A549 (cell line): ENCODE measurements at regions of chr1 and their contacts with region 1.

Region 1: GRCh38 chr1:228691926-228692325 is 43.4 kb upstream of the RHOU start:
- DNase-seq: peak; percentile 69 to 72
- ATAC-seq: peak in 1 of 2 experiments; percentile 80; a peak in 4 of 6 replicates
- H3K4me3 ChIP-seq: no peak overlapping the region
- H3K27ac ChIP-seq: no peak overlapping the region
- H3K4me1 ChIP-seq: peaks cover 7% of the 10 kb centered on the region; the same call in 1 of the 3 replicates
- CTCF ChIP-seq: peak; percentile 77
- EP300 ChIP-seq: no peak
- POLR2A ChIP-seq: no peak
- RAD21 ChIP-seq: peak; percentile 87 to 89

Region 2: GRCh38 chr1:228471762-228472398 is 220.0 kb before region 1 on chr1:
- CTCF ChIA-PET with region 1: no interaction called
- POLR2A ChIA-PET with region 1: no interaction called
- DNase-seq: peak; percentile 64 to 75
- ATAC-seq: peak; percentile 70 to 89
- H3K4me3 ChIP-seq: no peak overlapping the region
- H3K27ac ChIP-seq: no peak overlapping the region
- H3K4me1 ChIP-seq: no peaks in the 10 kb centered on the region
- CTCF ChIP-seq: peak; percentile 40
- EP300 ChIP-seq: no peak
- POLR2A ChIP-seq: no peak
- RAD21 ChIP-seq: peak in 1 of 2 experiments; percentile 55; a peak in 2 of 5 replicates

Region 3: GRCh38 chr1:228702433-228702832 is 10.5 kb after region 1 on chr1:
- CTCF ChIA-PET with region 1: interaction called, 16 read pairs
- POLR2A ChIA-PET with region 1: no interaction called
- DNase-seq: no peak
- ATAC-seq: no peak
- H3K4me3 ChIP-seq: no peak overlapping the region
- H3K27ac ChIP-seq: no peak overlapping the region
- H3K4me1 ChIP-seq: no peaks in the 10 kb centered on the region
- CTCF ChIP-seq: no peak
- EP300 ChIP-seq: no peak
- POLR2A ChIP-seq: no peak
- RAD21 ChIP-seq: no peak

Region 4: GRCh38 chr1:229056046-229056445 is 364.1 kb after region 1 on chr1:
- CTCF ChIA-PET with region 1: no interaction called
- POLR2A ChIA-PET with region 1: no interaction called
- DNase-seq: no peak
- ATAC-seq: no peak
- H3K4me3 ChIP-seq: no peak overlapping the region
- H3K27ac ChIP-seq: no peak overlapping the region
- H3K4me1 ChIP-seq: no peaks in the 10 kb centered on the region
- CTCF ChIP-seq: no peak
- EP300 ChIP-seq: no peak
- POLR2A ChIP-seq: no peak
- RAD21 ChIP-seq: no peak

Region 5: GRCh38 chr1:229156872-229157271 is 464.9 kb after region 1 on chr1:
- CTCF ChIA-PET with region 1: interaction called, 18 read pairs
- POLR2A ChIA-PET with region 1: no interaction called
- DNase-seq: peak; percentile 33 to 57
- ATAC-seq: peak; percentile 70 to 80; a peak in 4 of 6 replicates
- H3K4me3 ChIP-seq: no peak overlapping the region
- H3K27ac ChIP-seq: no peak overlapping the region; a peak in 1 of 6 replicates
- H3K4me1 ChIP-seq: no peaks in the 10 kb centered on the region
- CTCF ChIP-seq: peak; percentile 50; the same call in 2 of the 3 replicates
- EP300 ChIP-seq: no peak
- POLR2A ChIP-seq: no peak
- RAD21 ChIP-seq: peak; percentile 75 to 76